AG04449 (cell line): ENCODE measurements at regions of chr15 and their contacts with region 1.

Region 1: GRCh38 chr15:50134520-50135024 is 15.5 kb upstream of the ATP8B4 start:
- DNase-seq: peak; percentile 29
- H3K4me3 ChIP-seq: no peak overlapping the region
- CTCF ChIP-seq: no peak

Region 2: GRCh38 chr15:50145451-50145872 is 10.9 kb after region 1 on chr15:
- CTCF ChIA-PET with region 1: interaction called, 16 read pairs
- POLR2A ChIA-PET with region 1: no interaction called
- DNase-seq: peak; percentile 24
- H3K4me3 ChIP-seq: no peak overlapping the region
- CTCF ChIP-seq: no peak